ENCODE measurements at regions of chr3 and their contacts with region 1.

Region 1: GRCh38 chr3:13012228-13012691 is 61.0 kb downstream of the IQSEC1 start:
- DNase-seq: peak; percentile 69
- H3K4me3 Mint-ChIP-seq: peak overlapping the region; percentile 78
- H3K27ac Mint-ChIP-seq: peak overlapping the region; percentile 100
- H3K4me1 Mint-ChIP-seq: peaks cover 78% of the 10 kb centered on the region
- H3K27me3 Mint-ChIP-seq: no peaks in the 10 kb centered on the region

Region 2: DNA sequence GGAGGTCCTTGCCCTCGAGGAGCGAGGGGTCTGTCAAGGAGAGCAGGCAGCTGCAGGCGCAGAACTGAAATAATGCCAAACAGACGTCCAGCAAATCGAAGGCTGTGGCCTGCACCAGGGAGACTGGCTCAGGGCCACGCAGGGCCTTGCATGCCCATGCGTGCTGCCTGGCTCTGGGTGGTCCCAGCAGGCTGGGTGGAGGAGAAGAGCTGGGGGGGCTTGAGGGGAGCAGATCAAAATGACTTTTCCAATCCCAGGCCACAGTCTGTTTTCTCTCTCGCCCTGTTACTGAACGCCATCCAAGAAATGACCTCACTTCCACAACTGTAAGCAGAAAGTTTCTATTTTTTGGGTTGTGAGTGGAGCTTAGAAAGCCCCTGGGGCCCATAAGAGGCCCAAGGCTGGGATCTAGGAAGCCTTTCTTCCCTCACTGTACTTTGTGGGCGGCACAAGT is 74.0 kb before region 1 on chr3:
- CTCF ChIA-PET with region 1: no interaction called
- POLR2A ChIA-PET with region 1: no interaction called
- DNase-seq: no peak
- H3K4me3 Mint-ChIP-seq: no peak overlapping the region
- H3K27ac Mint-ChIP-seq: no peak overlapping the region
- H3K4me1 Mint-ChIP-seq: no peaks in the 10 kb centered on the region
- H3K27me3 Mint-ChIP-seq: no peaks in the 10 kb centered on the region

Region 3: DNA sequence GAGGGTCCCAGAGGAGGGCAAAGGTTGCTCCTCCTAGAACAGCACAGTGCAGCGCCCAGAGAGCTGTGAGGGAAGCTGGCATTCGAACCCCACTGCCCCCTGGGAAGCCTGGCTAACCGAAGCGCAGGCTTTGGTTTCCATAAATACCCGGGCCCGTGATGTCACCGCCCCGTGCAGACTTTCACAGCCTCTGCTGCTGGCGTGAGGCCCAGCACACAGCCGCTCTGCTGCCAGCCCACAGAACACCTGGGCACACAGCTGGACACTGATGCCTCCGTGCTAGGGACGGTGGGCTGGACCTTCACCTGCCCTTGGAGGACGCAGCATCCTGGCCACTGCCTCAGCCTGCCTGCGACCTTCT is 60.0 kb after region 1 on chr3:
- CTCF ChIA-PET with region 1: interaction called, 3 read pairs
- POLR2A ChIA-PET with region 1: interaction called, 23 read pairs
- DNase-seq: no peak
- H3K4me3 Mint-ChIP-seq: no peak overlapping the region
- H3K27ac Mint-ChIP-seq: no peak overlapping the region
- H3K4me1 Mint-ChIP-seq: peaks cover 41% of the 10 kb centered on the region
- H3K27me3 Mint-ChIP-seq: peaks cover 38% of the 10 kb centered on the region

Region 4: DNA sequence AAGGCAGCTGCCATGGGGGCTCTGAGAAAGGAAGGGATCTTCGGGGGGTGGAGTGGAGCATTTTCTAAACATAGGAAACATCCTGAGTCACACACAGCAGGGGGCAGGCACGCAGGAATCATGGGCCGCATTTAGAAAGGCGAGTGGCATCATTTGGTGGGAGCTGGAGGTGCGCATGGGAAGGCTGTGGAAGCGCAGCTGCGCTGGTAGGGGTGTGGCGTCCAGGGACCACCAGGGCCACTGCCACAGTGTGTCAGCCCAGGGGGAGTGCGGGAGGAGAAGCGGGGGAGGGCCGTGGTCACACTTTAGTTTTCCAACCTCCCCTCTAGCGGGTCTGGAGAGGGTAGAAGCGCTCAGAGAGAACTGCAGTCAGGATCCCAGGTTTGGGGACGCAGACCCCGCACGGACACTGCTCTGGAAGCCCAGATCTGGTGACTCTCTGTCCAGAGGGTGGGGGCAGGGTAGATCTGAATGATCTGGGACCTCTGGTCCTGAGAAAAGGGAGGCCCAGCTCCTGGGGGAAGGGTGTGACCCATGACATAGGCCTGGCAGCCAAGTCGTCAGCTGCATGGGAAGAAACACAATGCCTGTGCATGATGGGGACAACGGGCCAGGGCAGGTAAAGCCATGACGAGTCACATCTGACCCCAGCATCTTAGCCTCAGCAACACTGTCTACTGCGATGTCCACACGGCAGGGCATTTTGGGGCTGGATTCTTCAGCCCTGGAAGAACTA is 148.9 kb after region 1 on chr3:
- CTCF ChIA-PET with region 1: no interaction called
- POLR2A ChIA-PET with region 1: no interaction called
- DNase-seq: no peak
- H3K4me3 Mint-ChIP-seq: no peak overlapping the region
- H3K27ac Mint-ChIP-seq: no peak overlapping the region
- H3K4me1 Mint-ChIP-seq: no peaks in the 10 kb centered on the region
- H3K27me3 Mint-ChIP-seq: peaks cover 9% of the 10 kb centered on the region

Measured in activated CD4-positive, alpha-beta memory T cell treated with anti-CD3 and anti-CD28 coated beads, Interleukin-2, amount 10 ng/mL, durations not matched to agents 7 days and 5 days (primary cell).